Endothelial cell of umbilical vein (primary cell): ENCODE measurements at regions of chr17 and their contacts with region 1.

Region 1: GRCh38 chr17:48492401-48493298 is 38.2 kb downstream of the HOXB1 start:
- DNase-seq: peak; percentile 62
- H3K4me3 ChIP-seq: peak overlapping the region in 2 of 3 experiments; percentile 10 to 16
- H3K27ac ChIP-seq: no peak overlapping the region
- H3K4me1 ChIP-seq: peaks cover 10% of the 10 kb centered on the region
- H3K27me3 ChIP-seq: peaks cover 2 to 3% of the 10 kb centered on the region in 2 experiments
- CTCF ChIP-seq: peak; percentile 84 to 90
- POLR2A ChIP-seq: no peak

Region 2: DNA sequence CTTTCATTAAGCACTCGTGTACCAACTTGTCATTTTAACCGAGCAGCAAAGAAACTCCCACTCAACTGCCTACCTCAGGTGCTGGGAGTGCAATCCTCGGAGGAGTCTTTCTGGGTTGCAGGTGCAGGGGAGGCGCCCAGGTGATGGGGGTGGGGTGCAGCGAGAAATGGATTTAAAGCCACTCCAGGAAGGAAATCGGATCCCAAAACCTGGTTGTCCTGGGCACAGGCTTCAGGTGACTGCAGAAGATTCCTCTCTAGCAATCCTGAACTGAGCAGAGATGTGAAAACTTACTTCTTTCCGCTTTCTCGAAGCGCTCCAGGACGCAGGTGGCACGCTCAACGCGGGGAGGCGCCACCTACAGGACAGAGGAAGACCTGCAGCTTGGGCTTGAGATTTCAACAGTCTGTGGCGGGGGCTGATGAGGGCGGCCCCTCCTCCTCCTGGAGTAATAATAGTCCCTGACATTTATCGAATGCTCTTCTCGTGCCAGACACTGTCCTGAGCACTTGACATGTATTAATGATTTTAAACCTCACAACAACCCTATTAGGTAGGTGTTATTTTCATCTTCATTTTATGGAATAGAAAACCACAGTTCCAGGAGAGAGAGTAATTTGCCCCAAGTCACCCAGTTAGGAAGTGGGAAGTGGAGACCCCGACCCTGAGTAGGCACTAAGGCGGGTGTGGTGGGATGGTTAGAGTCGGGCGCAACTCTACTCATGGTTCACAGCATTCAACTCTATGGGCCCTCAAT is 35.4 kb before region 1 on chr17:
- CTCF ChIA-PET with region 1: interaction called, 4 read pairs
- POLR2A ChIA-PET with region 1: no interaction called
- dilution Hi-C with region 1: no loop called
- intact Hi-C with region 1: loop called (anchors 1 kb)
- DNase-seq: peak; percentile 70
- H3K4me3 ChIP-seq: no peak overlapping the region
- H3K27ac ChIP-seq: no peak overlapping the region
- H3K4me1 ChIP-seq: no peaks in the 10 kb centered on the region
- H3K27me3 ChIP-seq: peaks cover 40 to 54% of the 10 kb centered on the region in 2 experiments
- CTCF ChIP-seq: peak; percentile 96 to 98
- POLR2A ChIP-seq: no peak

Region 3: GRCh38 chr17:48555258-48556228 is 62.9 kb after region 1 on chr17:
- CTCF ChIA-PET with region 1: interaction called, 21 read pairs
- POLR2A ChIA-PET with region 1: no interaction called
- dilution Hi-C with region 1: no loop called
- intact Hi-C with region 1: no loop called
- DNase-seq: peak; percentile 89
- H3K4me3 ChIP-seq: peak overlapping the region; percentile 13 to 31 (median 14)
- H3K27ac ChIP-seq: no peak overlapping the region
- H3K4me1 ChIP-seq: peaks cover 28% of the 10 kb centered on the region
- H3K27me3 ChIP-seq: no peaks in the 10 kb centered on the region
- CTCF ChIP-seq: no peak
- POLR2A ChIP-seq: no peak

Region 4: GRCh38 chr17:48586355-48587258 is 94.0 kb after region 1 on chr17:
- CTCF ChIA-PET with region 1: interaction called, 13 read pairs
- POLR2A ChIA-PET with region 1: no interaction called
- dilution Hi-C with region 1: no loop called
- intact Hi-C with region 1: no loop called
- DNase-seq: peak; percentile 36
- H3K4me3 ChIP-seq: peak overlapping the region; percentile 33 to 81 (median 61)
- H3K27ac ChIP-seq: peak overlapping the region; percentile 22
- H3K4me1 ChIP-seq: peaks cover 48% of the 10 kb centered on the region
- H3K27me3 ChIP-seq: no peaks in the 10 kb centered on the region
- CTCF ChIP-seq: no peak
- POLR2A ChIP-seq: no peak

Region 5: GRCh38 chr17:48593840-48594537 is 101.3 kb after region 1 on chr17:
- CTCF ChIA-PET with region 1: interaction called, 6 read pairs
- POLR2A ChIA-PET with region 1: no interaction called
- dilution Hi-C with region 1: no loop called
- intact Hi-C with region 1: loop called (anchors 1 kb)
- DNase-seq: peak; percentile 86
- H3K4me3 ChIP-seq: no peak overlapping the region
- H3K27ac ChIP-seq: peak overlapping the region; percentile 0
- H3K4me1 ChIP-seq: peaks cover 25% of the 10 kb centered on the region
- H3K27me3 ChIP-seq: no peaks in the 10 kb centered on the region
- CTCF ChIP-seq: peak; percentile 95 to 97
- POLR2A ChIP-seq: no peak

Region 6: DNA sequence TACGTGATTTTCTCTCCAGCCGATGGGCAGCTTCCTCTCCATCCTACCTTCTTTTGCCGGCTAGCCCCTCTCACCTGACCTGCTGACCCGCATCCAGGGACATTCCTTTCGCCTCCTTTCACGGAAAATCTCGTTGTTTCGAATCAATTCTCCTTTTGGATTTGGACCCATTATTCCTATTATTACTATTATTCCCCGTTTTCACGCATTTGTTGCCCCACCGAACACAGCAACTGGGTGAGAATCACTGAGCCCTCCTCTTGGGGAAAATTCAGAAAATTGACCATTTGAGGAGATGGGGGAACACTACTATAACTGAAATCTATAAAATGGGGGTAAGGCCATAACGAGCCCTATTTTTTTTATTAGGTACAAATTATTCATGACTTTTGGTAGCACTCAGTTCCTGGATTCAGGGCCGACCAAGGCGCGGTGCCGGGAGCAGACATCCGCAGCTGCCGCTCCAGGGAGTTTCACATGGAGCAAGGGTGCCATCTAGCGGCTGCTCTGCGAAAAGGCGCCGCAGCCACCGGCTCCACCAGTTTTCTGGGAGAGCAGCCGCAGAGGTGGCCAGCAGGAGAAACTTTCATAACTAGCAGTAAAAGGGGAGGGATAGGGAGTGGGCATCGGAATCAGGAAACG is 125.7 kb after region 1 on chr17:
- CTCF ChIA-PET with region 1: interaction called, 4 read pairs
- POLR2A ChIA-PET with region 1: no interaction called
- dilution Hi-C with region 1: no loop called
- intact Hi-C with region 1: loop called (anchors 1 kb)
- DNase-seq: peak; percentile 83
- H3K4me3 ChIP-seq: peak overlapping the region; percentile 3 to 46 (median 30)
- H3K27ac ChIP-seq: no peak overlapping the region
- H3K4me1 ChIP-seq: peaks cover 27% of the 10 kb centered on the region
- H3K27me3 ChIP-seq: peaks cover 66 to 79% of the 10 kb centered on the region in 2 experiments
- CTCF ChIP-seq: peak; percentile 91 to 99
- POLR2A ChIP-seq: no peak